MCF 10A (cell line): ENCODE measurements at regions of chr1 and their contacts with region 1.

Region 1: DNA sequence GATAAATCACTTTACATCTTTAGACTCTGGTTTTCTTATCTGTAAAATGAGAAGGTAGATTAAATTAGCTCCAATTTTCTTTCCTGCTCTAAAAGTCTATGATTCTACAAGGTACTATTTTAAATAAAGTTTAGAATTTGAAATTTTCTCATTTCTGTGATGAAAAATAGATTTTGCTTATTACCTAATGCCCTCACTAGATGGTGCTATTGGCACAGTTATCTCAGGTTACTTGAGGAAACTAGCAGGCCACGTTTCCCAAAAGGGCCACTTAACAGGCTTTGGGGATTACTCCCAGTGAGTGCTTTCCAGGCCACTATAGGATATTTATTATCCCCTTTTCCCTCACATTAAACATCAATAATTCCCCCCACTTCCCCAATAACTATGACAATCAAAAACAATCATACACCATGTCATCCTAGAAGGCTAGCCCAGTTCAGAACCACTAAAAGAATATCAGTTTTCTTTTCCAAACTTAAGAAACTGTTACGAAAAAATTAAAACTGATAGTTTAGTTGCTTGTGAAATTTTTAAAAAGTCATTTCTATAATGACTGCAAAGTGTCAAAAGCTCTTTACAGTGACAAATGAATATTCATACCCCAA is 30.6 kb downstream of the OMA1 start:
- DNase-seq: peak; percentile 79
- H3K4me3 Mint-ChIP-seq: no peak overlapping the region
- H3K27ac Mint-ChIP-seq: no peak overlapping the region
- H3K4me1 Mint-ChIP-seq: no peaks in the 10 kb centered on the region
- H3K27me3 Mint-ChIP-seq: no peaks in the 10 kb centered on the region
- CTCF ChIP-seq: peak; percentile 60

Region 2: DNA sequence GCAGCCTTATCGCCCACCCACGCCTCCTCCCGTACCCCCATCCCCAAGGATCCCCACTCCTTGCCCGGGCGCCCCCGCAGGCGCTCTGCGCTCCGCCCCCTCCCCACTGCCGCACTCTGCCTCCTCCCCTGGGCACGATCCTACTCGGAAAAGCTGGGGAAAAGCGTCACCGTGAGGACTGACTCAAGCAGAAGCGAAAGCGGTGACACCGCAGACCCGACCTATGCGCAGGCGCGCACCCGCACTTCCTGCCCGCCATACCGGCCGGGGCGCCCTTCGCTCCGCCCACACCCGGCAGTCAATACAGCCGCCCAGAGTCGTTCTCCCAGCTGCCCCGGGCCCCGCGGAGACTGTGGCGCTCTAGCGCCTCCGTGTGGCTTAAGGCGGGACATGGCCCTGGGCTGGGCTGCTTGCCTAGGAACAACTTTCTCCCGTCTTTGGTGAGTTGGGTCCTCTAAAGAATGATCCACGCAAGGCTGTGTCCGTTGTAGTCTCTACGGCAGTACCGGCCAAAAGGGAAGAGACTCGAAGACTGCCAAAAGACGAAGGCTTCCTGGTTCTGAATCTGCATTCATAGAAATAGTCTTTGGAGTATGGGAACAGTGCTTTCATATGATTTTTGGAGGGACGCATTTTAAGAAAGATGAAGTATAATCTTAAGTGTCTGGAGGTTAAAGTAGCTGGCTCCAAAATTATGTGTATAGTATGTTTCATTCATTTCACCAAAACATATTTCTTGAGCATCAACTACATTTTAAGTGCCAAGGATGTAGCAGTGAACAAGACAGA is 30.8 kb after region 1 on chr1 and contains the start of gene OMA1:
- CTCF ChIA-PET with region 1: interaction called, 37 read pairs
- POLR2A ChIA-PET with region 1: interaction called, 12 read pairs
- intact Hi-C with region 1: loop called (anchors 1 kb)
- DNase-seq: peak; percentile 93
- H3K4me3 Mint-ChIP-seq: peak within 1 kb of the TSS; percentile 92
- H3K27ac Mint-ChIP-seq: peak within 1 kb of the TSS; percentile 95
- H3K4me1 Mint-ChIP-seq: peaks cover 20% of the 10 kb centered on the region
- H3K27me3 Mint-ChIP-seq: no peaks in the 10 kb centered on the region
- CTCF ChIP-seq: peak; percentile 84
- total RNA-seq, gene OMA1: 15.7 and 17.9 TPM in 2 replicates

Region 3: GRCh38 chr1:58618303-58618702 is 102.4 kb after region 1 on chr1:
- CTCF ChIA-PET with region 1: interaction called, 11 read pairs
- POLR2A ChIA-PET with region 1: no interaction called
- intact Hi-C with region 1: no loop called
- DNase-seq: peak; percentile 99
- H3K4me3 Mint-ChIP-seq: peak overlapping the region; percentile 24
- H3K27ac Mint-ChIP-seq: peak overlapping the region; percentile 91
- H3K4me1 Mint-ChIP-seq: peaks cover 36% of the 10 kb centered on the region
- H3K27me3 Mint-ChIP-seq: no peaks in the 10 kb centered on the region
- CTCF ChIP-seq: no peak

Region 4: GRCh38 chr1:58664881-58665280 is 149.0 kb after region 1 on chr1:
- CTCF ChIA-PET with region 1: interaction called, 14 read pairs
- POLR2A ChIA-PET with region 1: no interaction called
- intact Hi-C with region 1: no loop called
- DNase-seq: no peak
- H3K4me3 Mint-ChIP-seq: no peak overlapping the region
- H3K27ac Mint-ChIP-seq: no peak overlapping the region
- H3K4me1 Mint-ChIP-seq: no peaks in the 10 kb centered on the region
- H3K27me3 Mint-ChIP-seq: no peaks in the 10 kb centered on the region
- CTCF ChIP-seq: no peak

Region 5: DNA sequence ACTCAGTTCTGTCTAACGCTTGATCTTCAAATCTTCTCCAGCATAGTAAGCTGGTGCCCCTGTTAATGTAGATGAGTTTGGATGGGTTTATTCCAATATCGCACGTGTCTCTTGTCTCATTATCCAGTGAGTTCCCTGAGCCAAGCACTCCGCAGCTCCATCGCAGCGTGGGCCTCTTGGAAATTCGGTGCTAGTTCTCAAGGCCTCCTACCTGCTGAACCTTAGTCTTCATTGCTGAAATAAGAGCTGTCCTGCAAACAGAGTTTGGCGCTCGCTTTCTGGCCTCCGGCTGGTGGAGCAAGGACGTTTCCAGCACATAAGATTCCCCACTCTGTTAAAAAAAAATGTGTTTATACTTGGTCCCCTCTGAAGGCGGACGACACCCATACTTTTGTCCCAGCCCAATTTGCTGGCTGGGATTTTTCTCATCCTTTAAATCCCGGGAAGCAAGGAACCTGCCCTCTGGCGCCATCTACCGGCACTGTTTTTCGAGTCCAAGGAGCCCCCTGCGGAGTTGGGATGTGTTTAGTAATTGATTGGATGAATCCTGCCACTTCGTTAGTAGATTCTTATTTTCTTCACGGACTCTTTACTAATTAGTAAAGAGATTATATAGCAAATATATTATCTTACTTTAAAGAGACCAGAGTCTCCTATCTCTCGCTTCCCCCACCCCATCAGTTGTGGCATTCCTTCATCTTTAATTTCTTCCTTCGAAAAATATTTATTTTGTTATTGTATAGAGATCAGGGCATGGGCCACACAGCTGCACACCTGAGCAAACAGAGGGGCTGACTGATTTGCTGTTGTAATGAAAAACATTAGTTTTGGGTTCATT is 253.3 kb after region 1 on chr1:
- CTCF ChIA-PET with region 1: interaction called, 4 read pairs
- POLR2A ChIA-PET with region 1: no interaction called
- intact Hi-C with region 1: loop called (anchors 2 kb)
- DNase-seq: peak; percentile 78
- H3K4me3 Mint-ChIP-seq: no peak overlapping the region
- H3K27ac Mint-ChIP-seq: no peak overlapping the region
- H3K4me1 Mint-ChIP-seq: peaks cover 29% of the 10 kb centered on the region
- H3K27me3 Mint-ChIP-seq: no peaks in the 10 kb centered on the region
- CTCF ChIP-seq: peak; percentile 67